Mammary epithelial cell (primary cell): ENCODE measurements at regions of chr14 and their contacts with region 1.

Region 1: DNA sequence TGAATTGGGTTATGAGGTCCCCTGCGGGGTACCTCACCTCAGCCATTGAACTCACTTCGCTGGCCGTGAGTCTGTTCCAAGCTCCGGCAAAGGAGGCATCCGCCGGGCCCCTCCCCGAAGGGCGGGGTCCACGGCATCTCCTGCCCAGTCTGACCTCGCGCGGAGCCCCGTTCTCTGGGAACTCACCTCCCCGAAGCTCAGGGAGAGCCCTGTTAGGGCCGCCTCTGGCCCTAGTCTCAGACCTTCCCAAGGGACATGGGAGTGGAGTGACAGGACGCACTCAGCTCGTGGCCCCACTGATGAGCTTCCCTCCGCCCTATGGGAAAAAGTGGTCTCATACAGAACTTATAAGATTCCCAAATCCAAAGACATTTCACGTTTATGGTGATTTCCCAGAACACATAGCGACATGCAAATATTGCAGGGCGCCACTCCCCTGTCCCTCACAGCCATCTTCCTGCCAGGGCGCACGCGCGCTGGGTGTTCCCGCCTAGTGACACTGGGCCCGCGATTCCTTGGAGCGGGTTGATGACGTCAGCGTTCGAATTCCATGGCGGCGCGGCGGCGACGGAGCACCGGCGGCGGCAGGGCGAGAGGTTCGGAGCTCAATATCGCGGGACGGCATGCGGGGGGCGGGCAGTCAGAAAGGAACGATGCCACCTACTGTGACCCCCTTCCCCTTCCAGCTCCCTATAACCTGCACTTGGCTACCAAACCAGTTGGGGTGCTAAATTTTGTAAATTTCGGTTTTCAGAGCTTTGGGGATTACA is at the start of gene PARP2:
- DNase-seq: peak; percentile 100
- H3K4me3 ChIP-seq: peak within 1 kb of the TSS; percentile 85 to 97 (median 86)
- H3K27ac ChIP-seq: peak within 1 kb of the TSS; percentile 97
- H3K4me1 ChIP-seq: no peaks in the 10 kb centered on the region
- H3K27me3 ChIP-seq: no peaks in the 10 kb centered on the region
- CTCF ChIP-seq: no peak
- total RNA-seq, gene PARP2: 5.8 to 29.3 TPM

Region 2: GRCh38 chr14:20274062-20274461 is 69.2 kb before region 1 on chr14:
- CTCF ChIA-PET with region 1: no interaction called
- dilution Hi-C with region 1: no loop called
- in situ Hi-C with region 1: no loop called
- intact Hi-C with region 1: no loop called
- DNase-seq: no peak
- H3K4me3 ChIP-seq: no peak overlapping the region
- H3K27ac ChIP-seq: no peak overlapping the region
- H3K4me1 ChIP-seq: peaks cover 6% of the 10 kb centered on the region
- H3K27me3 ChIP-seq: no peaks in the 10 kb centered on the region
- CTCF ChIP-seq: no peak

Region 3: DNA sequence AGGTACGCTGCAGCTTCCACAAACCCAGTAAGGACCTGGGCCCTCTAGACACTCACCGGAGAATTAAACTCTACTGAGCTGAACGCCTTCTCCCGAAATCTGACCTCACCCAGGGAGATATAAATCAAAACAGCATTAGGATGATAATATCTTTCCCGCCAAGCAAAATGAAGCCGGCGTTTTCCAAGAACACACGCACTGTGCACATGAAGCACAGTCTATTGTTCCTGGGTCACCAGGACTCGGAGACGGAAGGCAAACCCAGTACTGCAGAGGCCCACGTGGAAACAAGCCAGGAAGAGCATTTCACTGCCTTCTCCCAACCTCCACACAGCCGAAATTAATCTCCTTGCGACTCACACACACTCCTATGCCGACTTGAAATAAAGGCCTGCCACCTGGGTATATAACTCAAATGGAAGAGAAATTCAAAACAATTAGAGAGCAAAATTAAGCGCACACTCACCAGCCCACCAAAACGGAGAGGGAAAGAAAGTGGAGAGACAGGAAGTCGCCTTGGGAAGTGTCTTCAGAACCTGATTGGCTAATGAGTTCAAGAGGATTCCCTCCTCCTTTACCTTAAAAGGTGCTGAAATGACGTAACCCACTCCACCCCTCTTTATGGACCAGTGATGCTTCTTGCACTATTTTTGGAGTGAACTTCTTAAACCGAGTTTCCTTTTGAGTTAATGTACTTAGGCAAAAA is 10.3 kb before region 1 on chr14 and contains the start of gene CCNB1IP1:
- CTCF ChIA-PET with region 1: interaction called, 19 read pairs
- dilution Hi-C with region 1: no loop called
- in situ Hi-C with region 1: no loop called
- intact Hi-C with region 1: loop called (anchors 1 kb)
- DNase-seq: peak; percentile 89
- H3K4me3 ChIP-seq: peak within 1 kb of the TSS; percentile 59 to 68 (median 64)
- H3K27ac ChIP-seq: peak within 1 kb of the TSS; percentile 80
- H3K4me1 ChIP-seq: peaks cover 12% of the 10 kb centered on the region
- H3K27me3 ChIP-seq: no peaks in the 10 kb centered on the region
- CTCF ChIP-seq: no peak
- total RNA-seq, gene CCNB1IP1: 51.2 to 55.4 TPM

Region 4: GRCh38 chr14:20454516-20455354 is 111.5 kb after region 1 on chr14 and contains the starts of genes APEX1 and OSGEP:
- CTCF ChIA-PET with region 1: no interaction called
- dilution Hi-C with region 1: no loop called
- in situ Hi-C with region 1: loop called in 1 of 2 experiments (anchors 25 kb)
- intact Hi-C with region 1: loop called (anchors 1 kb)
- DNase-seq: peak; percentile 98
- H3K4me3 ChIP-seq: peak within 1 kb of the TSS; percentile 94 to 97 (median 97)
- H3K27ac ChIP-seq: peak within 1 kb of the TSS; percentile 94
- H3K4me1 ChIP-seq: peaks cover 9% of the 10 kb centered on the region
- H3K27me3 ChIP-seq: no peaks in the 10 kb centered on the region
- CTCF ChIP-seq: no peak
- total RNA-seq, gene APEX1: 96.4 to 128 TPM
- total RNA-seq, gene OSGEP: 22.6 to 34.8 TPM